HEK293 (cell line): ENCODE measurements at regions of chr1 and their contacts with region 1.

Region 1: DNA sequence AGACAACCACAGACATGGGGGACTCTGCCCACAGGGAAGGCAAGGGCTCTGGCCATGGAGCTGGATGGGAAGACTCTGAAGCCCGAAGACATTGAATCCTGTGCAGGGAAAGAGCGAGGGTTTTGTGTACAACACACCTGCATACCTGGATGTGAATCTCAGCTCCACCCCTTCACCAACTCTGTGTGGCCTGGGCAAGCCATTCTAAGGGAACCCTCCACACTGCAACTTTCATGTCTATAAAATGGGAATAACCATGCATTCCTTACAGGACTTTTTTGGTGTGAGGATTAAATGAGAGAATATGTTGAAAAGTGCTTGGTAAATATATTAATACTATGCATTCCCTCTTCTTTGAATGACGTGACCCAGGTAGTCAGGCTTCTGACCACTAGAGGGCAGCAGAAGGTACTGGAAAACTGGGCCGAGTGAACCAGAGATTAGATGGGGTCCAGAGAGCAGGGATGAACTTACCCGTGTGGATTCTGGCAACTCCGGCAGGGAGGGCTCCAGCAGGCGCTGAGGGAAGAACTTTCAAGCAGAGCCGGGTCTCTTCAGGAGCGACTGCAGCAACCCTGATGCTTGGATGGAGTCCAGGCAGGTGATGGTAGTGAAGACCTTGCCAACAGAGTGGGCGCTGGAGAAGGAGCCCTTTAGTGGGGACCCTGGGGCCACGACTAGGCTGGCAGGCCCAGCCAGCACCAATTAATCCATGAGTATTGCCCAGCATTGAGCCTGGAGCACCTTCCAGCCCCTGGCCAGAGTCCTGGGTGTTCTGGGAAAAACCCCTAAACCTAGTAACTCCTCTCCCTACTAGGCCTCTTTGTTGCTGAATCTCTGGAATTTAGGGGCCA is 834 bp upstream of the ELF3 start:
- H3K4me3 ChIP-seq: no peak overlapping the region
- H3K27ac ChIP-seq: no peak overlapping the region
- H3K4me1 ChIP-seq: no peaks in the 10 kb centered on the region; the same call in 1 of the 2 replicates
- CTCF ChIP-seq: peak; percentile 72

Region 2: GRCh38 chr1:201937624-201938213 is 71.8 kb before region 1 on chr1:
- CTCF ChIA-PET with region 1: no interaction called
- POLR2A ChIA-PET with region 1: no interaction called
- H3K4me3 ChIP-seq: no peak overlapping the region
- H3K27ac ChIP-seq: no peak overlapping the region
- H3K4me1 ChIP-seq: no peaks in the 10 kb centered on the region
- CTCF ChIP-seq: no peak

Region 3: DNA sequence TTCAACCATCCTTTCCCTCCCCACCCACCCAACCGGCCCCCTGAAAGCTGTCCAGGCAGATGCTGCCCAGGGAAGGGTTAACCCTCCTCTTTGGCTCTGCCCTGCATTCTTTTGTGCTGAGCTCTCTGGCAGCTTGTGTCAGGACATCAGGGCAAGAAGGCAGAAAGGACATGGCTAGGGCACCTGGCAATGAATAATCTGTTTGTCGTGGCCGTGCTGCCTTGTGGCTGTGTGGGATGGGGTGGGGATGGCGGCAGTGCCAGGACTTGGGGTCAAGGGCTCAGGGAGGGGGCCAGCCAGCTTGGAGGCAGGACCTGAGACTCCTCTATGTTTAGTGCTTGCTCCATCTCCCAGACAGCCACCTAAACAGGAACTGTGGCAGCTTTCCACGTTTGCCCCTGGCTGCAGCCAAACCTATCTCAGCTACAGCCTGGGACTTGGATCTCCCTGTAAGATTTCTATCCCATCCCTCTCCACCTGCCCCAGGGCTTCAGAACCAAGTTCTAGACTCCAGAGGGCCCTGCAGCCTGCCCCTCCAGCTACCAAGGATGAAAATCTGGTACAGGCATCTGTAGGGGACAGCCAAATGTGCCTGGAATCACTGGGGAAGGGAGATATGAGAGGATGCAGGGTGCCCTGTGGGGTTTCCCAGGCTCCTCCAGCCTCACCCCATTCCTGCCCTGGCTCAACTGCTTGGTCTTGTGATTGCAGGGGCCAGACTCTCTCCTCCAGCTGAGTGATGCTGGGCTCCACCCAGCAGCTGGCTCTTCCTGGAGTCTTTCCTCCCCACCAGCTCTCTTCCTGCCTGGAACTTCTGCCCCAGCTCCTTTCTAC is 103.5 kb after region 1 on chr1:
- CTCF ChIA-PET with region 1: interaction called, 159 read pairs
- POLR2A ChIA-PET with region 1: no interaction called
- H3K4me3 ChIP-seq: no peak overlapping the region
- H3K27ac ChIP-seq: no peak overlapping the region
- H3K4me1 ChIP-seq: no peaks in the 10 kb centered on the region
- CTCF ChIP-seq: no peak

Region 4: GRCh38 chr1:202122639-202123335 is 113.2 kb after region 1 on chr1 and contains the start of gene GPR37L1:
- CTCF ChIA-PET with region 1: interaction called, 159 read pairs
- POLR2A ChIA-PET with region 1: no interaction called
- H3K4me3 ChIP-seq: no peak within 1 kb of the TSS
- H3K27ac ChIP-seq: no peak within 1 kb of the TSS
- H3K4me1 ChIP-seq: no peaks in the 10 kb centered on the region
- CTCF ChIP-seq: peak; percentile 24; the same call in 1 of the 2 replicates

Region 5: DNA sequence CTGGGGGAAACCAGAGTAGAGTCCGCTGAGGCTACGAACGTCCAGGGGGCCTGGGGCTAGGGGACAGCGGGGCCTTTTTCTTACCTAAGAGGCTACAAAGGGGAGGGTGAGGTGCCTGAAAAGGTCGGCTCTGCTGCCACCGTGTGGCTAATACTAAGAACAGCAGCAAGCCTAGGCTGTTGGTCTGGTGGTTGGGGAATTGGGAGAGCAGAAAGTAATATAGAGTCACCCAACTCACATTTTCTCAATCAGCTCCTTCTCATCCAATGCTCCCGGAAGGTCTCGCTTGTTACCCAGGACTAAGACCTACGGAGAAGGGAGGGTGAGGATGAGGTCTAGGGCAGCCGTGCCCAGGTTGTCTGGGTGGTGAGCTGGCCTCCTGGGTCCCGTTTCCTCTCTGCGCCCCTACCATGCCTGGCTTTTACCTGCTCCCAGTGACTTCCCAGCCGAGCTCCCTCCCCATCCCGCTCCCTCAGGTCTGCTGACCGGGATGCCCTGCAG is 125.7 kb after region 1 on chr1:
- CTCF ChIA-PET with region 1: interaction called, 25 read pairs
- POLR2A ChIA-PET with region 1: interaction called, 3 read pairs
- H3K4me3 ChIP-seq: no peak overlapping the region
- H3K27ac ChIP-seq: no peak overlapping the region
- H3K4me1 ChIP-seq: no peaks in the 10 kb centered on the region
- CTCF ChIP-seq: 0 out of 2 replicates have a peak, but pooled peaks have one; percentile 39